Colonic mucosa (tissue), 4 donors: ENCODE measurements at regions of chr2 and their contacts with region 1.

Region 1: GRCh38 chr2:19362755-19363473 is 4.5 kb upstream of the OSR1 start:
- DNase-seq: peak; percentile 88
- H3K4me3 ChIP-seq: peak overlapping the region; percentile 37
- H3K27ac ChIP-seq: peak overlapping the region; percentile 51
- H3K4me1 ChIP-seq: no peaks in the 10 kb centered on the region
- H3K27me3 ChIP-seq: peaks cover 19% of the 10 kb centered on the region
- CTCF ChIP-seq: peak; percentile 69

Region 2: DNA sequence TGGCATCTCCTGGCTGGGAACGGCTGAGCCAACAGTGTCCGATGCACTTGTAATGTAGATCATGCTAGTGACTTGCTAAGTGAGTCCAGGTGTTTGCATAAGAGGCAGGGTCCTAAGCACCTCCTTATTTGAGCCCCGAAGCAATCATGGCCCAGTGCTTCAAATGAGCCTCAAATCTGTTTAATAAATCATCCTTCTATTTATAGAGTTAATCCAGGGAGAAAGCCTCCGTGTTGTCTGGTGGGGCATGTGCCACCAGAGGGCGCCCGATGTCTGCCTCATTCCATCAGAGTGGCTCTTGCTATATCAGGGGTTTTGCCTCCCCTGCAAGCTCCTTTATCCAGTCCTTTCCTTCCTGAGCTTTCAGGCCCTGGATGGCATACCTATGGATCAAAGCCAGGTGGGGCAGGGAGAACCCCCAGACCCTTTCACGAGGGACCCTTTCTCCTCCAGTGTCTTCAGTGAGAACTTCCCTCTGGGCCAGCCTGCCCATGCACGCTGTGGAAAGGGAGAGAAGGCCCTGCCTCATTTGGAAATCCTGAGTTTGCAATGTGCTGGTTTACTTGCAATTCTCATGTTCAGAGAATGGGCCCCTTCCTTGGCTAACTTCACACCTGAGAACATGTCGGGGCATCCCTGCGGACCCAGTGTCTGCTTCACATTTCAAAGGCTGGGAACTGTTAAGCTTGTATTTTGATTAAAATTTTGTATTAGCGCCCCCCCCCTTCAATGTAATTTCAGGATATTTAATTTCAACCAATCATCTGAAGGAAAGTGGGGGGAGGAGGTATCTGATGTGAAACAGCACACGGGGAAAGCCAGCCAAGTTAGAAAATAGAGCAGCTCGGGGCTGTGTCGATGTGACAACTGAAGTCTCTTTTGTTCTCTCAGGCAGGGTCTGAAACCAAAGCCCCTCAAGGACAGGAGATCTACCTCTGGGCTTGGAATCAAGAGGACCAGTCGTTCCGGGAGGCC is 842.2 kb before region 1 on chr2:
- intact Hi-C with region 1: loop called (anchors 5 kb)
- DNase-seq: peak; percentile 84
- H3K4me3 ChIP-seq: no peak overlapping the region
- H3K27ac ChIP-seq: no peak overlapping the region
- H3K4me1 ChIP-seq: no peaks in the 10 kb centered on the region
- H3K27me3 ChIP-seq: no peaks in the 10 kb centered on the region
- CTCF ChIP-seq: peak; percentile 82

Region 3: GRCh38 chr2:18749912-18750526 is 612.9 kb before region 1 on chr2:
- intact Hi-C with region 1: loop called (anchors 2 kb)
- DNase-seq: peak; percentile 76
- H3K4me3 ChIP-seq: no peak overlapping the region
- H3K27ac ChIP-seq: no peak overlapping the region
- H3K4me1 ChIP-seq: no peaks in the 10 kb centered on the region
- H3K27me3 ChIP-seq: no peaks in the 10 kb centered on the region
- CTCF ChIP-seq: peak; percentile 65

Region 4: GRCh38 chr2:18883616-18884456 is 479.1 kb before region 1 on chr2:
- intact Hi-C with region 1: loop called (anchors 10 kb)
- DNase-seq: no peak
- H3K4me3 ChIP-seq: no peak overlapping the region
- H3K27ac ChIP-seq: no peak overlapping the region
- H3K4me1 ChIP-seq: no peaks in the 10 kb centered on the region
- H3K27me3 ChIP-seq: no peaks in the 10 kb centered on the region
- CTCF ChIP-seq: no peak

Region 5: GRCh38 chr2:19038071-19039015 is 324.6 kb before region 1 on chr2:
- intact Hi-C with region 1: no loop called
- DNase-seq: no peak
- H3K4me3 ChIP-seq: no peak overlapping the region
- H3K27ac ChIP-seq: no peak overlapping the region
- H3K4me1 ChIP-seq: no peaks in the 10 kb centered on the region
- H3K27me3 ChIP-seq: no peaks in the 10 kb centered on the region
- CTCF ChIP-seq: no peak